GM23248 (cell line): ENCODE measurements at regions of chr4 and their contacts with region 1.

Region 1: GRCh38 chr4:158856852-158857251 is 88.0 kb downstream of the FNIP2 start:
- DNase-seq: peak; percentile 64
- H3K4me3 ChIP-seq: no peak overlapping the region
- H3K27ac ChIP-seq: no peak overlapping the region
- H3K4me1 ChIP-seq: peaks cover 17% of the 10 kb centered on the region
- H3K27me3 ChIP-seq: no peaks in the 10 kb centered on the region

Region 2: DNA sequence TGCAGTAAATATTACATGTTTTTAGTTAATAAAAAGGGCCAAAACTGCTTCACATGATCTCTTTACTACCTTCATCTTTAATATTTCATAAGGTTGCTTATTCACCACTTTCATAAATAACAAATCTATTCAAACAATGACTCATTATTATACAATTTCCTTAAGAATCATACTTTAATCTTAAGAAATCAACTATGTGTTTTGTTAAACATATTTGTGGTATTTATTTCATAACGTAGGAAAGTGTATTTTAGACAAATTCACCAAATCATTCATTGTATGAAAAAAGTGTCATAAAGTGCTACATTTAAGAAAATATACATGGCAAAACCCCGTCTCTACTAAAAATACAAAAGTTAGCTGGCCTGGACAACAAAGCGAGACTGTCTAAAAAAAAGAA is 485.7 kb before region 1 on chr4:
- in situ Hi-C with region 1: no loop called
- DNase-seq: peak; percentile 60
- H3K4me3 ChIP-seq: no peak overlapping the region
- H3K27ac ChIP-seq: peak overlapping the region; percentile 19; the same call in 1 of the 2 replicates
- H3K4me1 ChIP-seq: peaks cover 32% of the 10 kb centered on the region
- H3K27me3 ChIP-seq: no peaks in the 10 kb centered on the region

Region 3: DNA sequence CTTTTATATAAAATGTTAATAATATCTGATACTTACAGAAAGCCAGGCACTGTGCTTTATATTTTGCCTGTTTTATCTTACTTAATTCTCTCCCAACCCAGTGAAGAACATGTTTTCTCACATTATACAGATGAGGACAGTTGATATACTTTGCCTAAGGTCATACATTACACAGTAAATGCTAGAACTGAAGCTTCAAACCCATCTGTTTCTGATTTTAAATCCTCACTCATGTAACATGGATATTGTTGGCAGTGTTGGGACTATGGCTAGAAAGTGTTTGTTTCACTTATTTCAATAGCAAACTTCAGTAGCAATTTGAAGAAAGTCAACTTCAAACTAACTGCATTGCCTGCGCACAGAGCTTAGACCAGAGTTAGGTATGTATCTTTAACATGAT is 303.4 kb after region 1 on chr4:
- in situ Hi-C with region 1: no loop called
- DNase-seq: peak; percentile 13
- H3K4me3 ChIP-seq: no peak overlapping the region
- H3K27ac ChIP-seq: no peak overlapping the region
- H3K4me1 ChIP-seq: no peaks in the 10 kb centered on the region
- H3K27me3 ChIP-seq: no peaks in the 10 kb centered on the region

Region 4: DNA sequence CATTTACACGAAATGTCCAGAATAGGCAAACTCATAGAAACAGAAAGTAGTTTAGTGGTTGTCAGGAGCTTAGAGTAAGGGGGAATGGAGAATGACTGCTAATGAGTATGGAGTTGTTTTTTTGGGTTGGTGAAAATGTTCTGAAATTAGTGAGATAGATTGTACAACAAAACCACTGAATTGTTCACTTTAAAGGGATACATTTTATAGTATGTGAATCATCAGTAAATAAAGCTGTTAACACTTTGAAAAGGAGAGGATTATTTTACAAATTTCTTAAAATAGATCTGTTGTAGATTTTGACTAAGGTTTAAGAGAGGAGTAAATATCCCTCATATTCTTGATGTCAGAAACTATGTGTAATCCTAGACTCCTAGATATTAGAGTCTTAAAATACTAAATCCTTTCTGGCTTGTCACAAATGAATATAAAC is 328.8 kb after region 1 on chr4:
- in situ Hi-C with region 1: loop called (anchors 10 kb)
- DNase-seq: peak; percentile 14
- H3K4me3 ChIP-seq: no peak overlapping the region
- H3K27ac ChIP-seq: no peak overlapping the region
- H3K4me1 ChIP-seq: peaks cover 8% of the 10 kb centered on the region; the same call in 1 of the 2 replicates
- H3K27me3 ChIP-seq: no peaks in the 10 kb centered on the region

Region 5: GRCh38 chr4:159446266-159446976 is 589.6 kb after region 1 on chr4:
- in situ Hi-C with region 1: loop called (anchors 10 kb)
- DNase-seq: peak; percentile 86
- H3K4me3 ChIP-seq: no peak overlapping the region
- H3K27ac ChIP-seq: no peak overlapping the region
- H3K4me1 ChIP-seq: 0 out of 2 replicates have a peak, but pooled peaks cover 3% of the 10 kb centered on the region
- H3K27me3 ChIP-seq: no peaks in the 10 kb centered on the region

Region 6: GRCh38 chr4:159871141-159871540 is 1014.3 kb after region 1 on chr4:
- in situ Hi-C with region 1: no loop called
- DNase-seq: no peak
- H3K4me3 ChIP-seq: no peak overlapping the region
- H3K27ac ChIP-seq: no peak overlapping the region
- H3K4me1 ChIP-seq: no peaks in the 10 kb centered on the region
- H3K27me3 ChIP-seq: no peaks in the 10 kb centered on the region